Caco-2 (cell line): ENCODE measurements at regions of chr12 and their contacts with region 1.

Region 1: DNA sequence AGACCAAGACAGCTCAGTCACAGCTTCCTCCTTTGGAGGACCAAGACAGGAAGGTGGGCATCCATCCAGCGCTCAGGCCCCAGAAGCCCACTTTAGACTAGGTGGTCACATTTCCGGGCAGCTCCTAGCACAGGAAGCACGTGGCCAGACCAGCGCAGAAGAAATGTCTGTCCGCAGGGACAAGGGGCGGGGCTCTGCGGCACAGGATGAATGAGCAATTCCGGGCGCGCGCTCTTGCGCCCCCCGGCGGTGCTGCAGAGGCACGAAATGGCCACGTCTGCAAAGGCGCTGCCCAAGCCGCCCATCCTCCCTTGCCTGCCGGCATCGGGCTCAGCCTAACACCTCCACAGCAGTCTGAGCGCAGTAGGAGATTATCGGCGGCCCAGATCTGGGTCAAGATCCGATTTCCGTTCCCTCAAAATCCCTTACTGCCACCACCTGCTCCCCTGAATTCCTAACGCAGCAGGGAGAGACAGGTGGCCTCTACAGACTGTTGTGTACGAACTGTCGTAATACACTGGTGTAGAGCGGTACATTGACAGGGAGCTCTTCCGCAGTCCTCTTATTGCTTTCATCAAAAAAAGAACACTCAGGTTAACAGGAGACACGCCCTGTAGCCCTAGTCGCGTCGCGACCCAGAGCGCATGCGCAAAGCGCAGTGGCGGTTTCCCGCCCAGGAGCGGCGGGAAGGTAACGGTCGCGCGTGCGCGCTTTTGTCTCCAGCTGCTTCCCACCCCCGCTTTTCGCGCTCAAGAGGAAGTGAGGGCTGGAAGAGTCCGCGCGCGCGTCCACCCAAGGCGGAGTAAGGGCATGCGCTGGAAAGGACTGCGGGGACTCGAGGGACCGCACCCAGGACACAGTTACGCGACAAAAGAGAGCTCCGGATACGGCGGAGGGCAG is 794 bp downstream of the TUBA1B start:
- DNase-seq: peak; percentile 94 to 96
- H3K4me3 ChIP-seq: peak overlapping the region; percentile 88
- H3K4me3 Mint-ChIP-seq: peak overlapping the region; percentile 74
- H3K27ac Mint-ChIP-seq: peak overlapping the region; percentile 99
- H3K4me1 ChIP-seq: peaks cover 8% of the 10 kb centered on the region
- H3K4me1 Mint-ChIP-seq: peaks cover 10% of the 10 kb centered on the region
- H3K27me3 ChIP-seq: no peaks in the 10 kb centered on the region
- H3K27me3 Mint-ChIP-seq: no peaks in the 10 kb centered on the region
- CTCF ChIP-seq: peak; percentile 92 to 95

Region 2: DNA sequence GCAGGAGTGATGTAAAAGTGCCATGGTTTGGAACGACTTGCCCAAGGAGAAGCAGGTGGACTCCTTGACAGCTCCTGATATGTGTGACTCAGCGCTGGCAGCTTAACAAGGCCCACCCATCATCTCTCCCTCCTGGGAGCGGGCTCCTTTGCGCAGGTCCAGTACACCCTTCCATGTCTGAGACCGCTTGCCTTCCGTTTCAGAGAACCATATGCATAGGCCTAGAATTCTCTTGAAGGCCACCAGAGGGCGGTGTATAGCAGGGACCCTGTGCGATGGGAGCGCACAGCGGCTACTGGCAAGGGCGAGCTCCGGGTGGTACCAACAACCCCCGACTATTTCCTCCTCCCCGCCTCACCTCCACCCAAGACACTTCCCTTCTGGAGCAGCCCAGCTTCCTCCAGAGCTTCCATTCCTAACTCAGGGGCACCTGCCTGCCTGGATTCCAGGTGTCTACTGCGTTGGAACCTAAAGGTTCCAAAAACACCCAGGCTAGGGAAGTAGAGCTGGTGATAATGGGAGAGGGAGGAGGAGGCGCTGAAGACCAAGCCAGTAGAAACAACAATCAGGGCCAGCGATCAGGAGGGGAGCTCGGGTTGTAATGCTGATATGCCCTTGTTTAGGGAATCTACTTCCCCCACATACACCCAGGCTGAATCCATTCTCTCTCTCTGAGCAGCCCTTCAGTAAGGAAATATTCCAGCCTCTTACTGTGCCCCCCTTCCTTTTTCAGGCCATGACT is 42.0 kb before region 1 on chr12:
- CTCF ChIA-PET with region 1: interaction called, 43 read pairs
- POLR2A ChIA-PET with region 1: interaction called, 5 read pairs
- intact Hi-C with region 1: no loop called
- DNase-seq: peak; percentile 84
- H3K4me3 ChIP-seq: no peak overlapping the region
- H3K4me3 Mint-ChIP-seq: peak overlapping the region; percentile 50
- H3K27ac Mint-ChIP-seq: no peak overlapping the region
- H3K4me1 ChIP-seq: peaks cover 11% of the 10 kb centered on the region
- H3K4me1 Mint-ChIP-seq: no peaks in the 10 kb centered on the region
- H3K27me3 ChIP-seq: peaks cover 8% of the 10 kb centered on the region; the same call in 1 of the 2 replicates
- H3K27me3 Mint-ChIP-seq: peaks cover 19% of the 10 kb centered on the region
- CTCF ChIP-seq: peak; percentile 91 to 97

Region 3: GRCh38 chr12:49146406-49146805 is 16.0 kb after region 1 on chr12:
- CTCF ChIA-PET with region 1: no interaction called
- POLR2A ChIA-PET with region 1: no interaction called
- intact Hi-C with region 1: no loop called
- DNase-seq: no peak
- H3K4me3 ChIP-seq: no peak overlapping the region
- H3K4me3 Mint-ChIP-seq: no peak overlapping the region
- H3K27ac Mint-ChIP-seq: no peak overlapping the region
- H3K4me1 ChIP-seq: no peaks in the 10 kb centered on the region
- H3K4me1 Mint-ChIP-seq: no peaks in the 10 kb centered on the region
- H3K27me3 ChIP-seq: no peaks in the 10 kb centered on the region
- H3K27me3 Mint-ChIP-seq: no peaks in the 10 kb centered on the region
- CTCF ChIP-seq: no peak

Region 4: DNA sequence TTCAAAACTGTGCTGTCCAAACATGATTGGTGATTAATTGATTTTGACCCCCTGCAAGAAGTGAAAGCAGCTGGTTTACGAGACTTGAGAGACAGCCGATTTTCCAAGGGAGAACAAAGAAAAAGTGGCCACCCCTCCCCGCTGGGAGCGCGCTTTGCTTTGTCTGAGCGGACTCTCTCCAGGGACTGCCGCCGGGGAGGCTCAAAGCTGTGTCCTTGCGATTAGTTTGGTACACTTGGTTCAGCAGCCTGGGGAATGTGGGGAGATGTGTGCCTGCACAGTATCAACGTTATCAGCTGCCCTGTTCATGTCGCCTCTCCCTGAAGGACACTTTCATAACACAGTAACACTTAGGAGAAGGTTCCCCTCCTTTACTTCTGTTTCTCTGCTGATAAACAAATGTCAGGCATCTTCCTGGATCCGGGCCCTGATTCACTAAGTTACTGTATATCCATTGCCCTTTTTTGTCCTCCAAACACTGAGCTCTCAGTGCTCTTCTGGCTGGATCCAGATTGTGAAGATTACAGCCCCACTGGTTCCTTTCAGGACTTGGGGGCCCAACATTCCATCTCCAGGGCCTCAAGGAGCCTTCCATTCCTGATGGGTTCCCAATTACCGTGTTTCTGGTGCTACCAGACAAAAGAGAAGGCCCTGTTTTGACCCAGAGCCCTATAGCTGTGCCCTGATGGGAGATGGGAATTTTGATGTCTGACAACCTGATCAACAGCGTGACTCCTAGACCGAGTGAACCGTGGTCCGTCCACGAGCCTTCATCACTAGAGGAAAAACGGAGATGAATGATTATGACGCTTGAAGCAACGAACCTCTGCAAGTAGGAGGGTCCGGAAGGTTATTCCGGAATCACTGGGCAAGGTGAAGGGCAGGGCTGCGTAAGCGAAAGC is 102.8 kb after region 1 on chr12:
- CTCF ChIA-PET with region 1: interaction called, 7 read pairs
- POLR2A ChIA-PET with region 1: interaction called, 21 read pairs
- intact Hi-C with region 1: loop called (anchors 1 kb)
- DNase-seq: no peak
- H3K4me3 ChIP-seq: no peak overlapping the region
- H3K4me3 Mint-ChIP-seq: peak overlapping the region; percentile 82
- H3K27ac Mint-ChIP-seq: peak overlapping the region; percentile 47
- H3K4me1 ChIP-seq: no peaks in the 10 kb centered on the region; the same call in 1 of the 2 replicates
- H3K4me1 Mint-ChIP-seq: peaks cover 13% of the 10 kb centered on the region
- H3K27me3 ChIP-seq: no peaks in the 10 kb centered on the region
- H3K27me3 Mint-ChIP-seq: peaks cover 2% of the 10 kb centered on the region
- CTCF ChIP-seq: no peak

Region 5: DNA sequence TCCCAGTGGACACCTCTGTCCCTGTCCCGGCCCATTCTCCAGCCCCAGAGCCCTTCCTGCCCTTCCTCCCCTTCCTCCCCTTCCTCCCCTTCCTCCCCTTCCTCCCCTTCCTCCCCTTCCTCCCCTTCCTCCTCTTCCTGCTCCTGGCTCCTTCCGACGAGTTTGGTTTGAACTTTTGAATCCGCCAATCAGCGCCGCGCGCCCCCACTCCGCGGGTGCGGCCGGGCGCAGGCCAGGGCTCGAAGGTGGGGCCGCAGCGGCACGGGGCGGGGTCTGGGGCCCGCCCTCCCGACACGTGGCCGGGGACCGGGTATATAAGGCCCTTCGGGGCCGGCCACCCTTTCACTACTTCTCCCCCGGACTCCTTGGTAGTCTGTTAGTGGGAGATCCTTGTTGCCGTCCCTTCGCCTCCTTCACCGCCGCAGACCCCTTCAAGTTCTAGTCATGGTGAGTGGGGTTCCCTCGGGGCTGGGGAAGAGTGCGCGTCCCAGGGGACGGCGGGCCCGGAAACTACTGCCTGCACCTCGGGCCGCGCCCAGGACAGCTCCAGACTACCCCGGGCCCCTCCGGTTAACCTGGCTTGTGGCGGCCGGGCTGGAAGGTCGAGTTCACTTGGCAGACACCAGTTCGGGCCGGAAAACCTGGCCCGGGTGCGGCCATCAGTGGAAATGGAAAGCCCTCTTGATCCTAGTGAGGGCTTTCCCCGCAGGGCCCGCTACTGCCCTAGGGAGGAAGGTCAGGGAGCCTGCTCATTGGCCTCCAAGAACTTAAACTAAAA is 134.5 kb after region 1 on chr12 and contains the start of gene TUBA1C:
- CTCF ChIA-PET with region 1: interaction called, 6 read pairs
- POLR2A ChIA-PET with region 1: interaction called, 11 read pairs
- intact Hi-C with region 1: no loop called
- DNase-seq: peak; percentile 97 to 99
- H3K4me3 ChIP-seq: peak within 1 kb of the TSS; percentile 79
- H3K4me3 Mint-ChIP-seq: peak within 1 kb of the TSS; percentile 86
- H3K27ac Mint-ChIP-seq: peak within 1 kb of the TSS; percentile 89
- H3K4me1 ChIP-seq: peaks cover 30% of the 10 kb centered on the region
- H3K4me1 Mint-ChIP-seq: peaks cover 22% of the 10 kb centered on the region
- H3K27me3 ChIP-seq: no peaks in the 10 kb centered on the region
- H3K27me3 Mint-ChIP-seq: no peaks in the 10 kb centered on the region
- CTCF ChIP-seq: no peak
- total RNA-seq, gene TUBA1C: 636 and 638 TPM in 2 replicates